ENCODE measurements at regions of chr2 and their contacts with region 1.

Region 1: DNA sequence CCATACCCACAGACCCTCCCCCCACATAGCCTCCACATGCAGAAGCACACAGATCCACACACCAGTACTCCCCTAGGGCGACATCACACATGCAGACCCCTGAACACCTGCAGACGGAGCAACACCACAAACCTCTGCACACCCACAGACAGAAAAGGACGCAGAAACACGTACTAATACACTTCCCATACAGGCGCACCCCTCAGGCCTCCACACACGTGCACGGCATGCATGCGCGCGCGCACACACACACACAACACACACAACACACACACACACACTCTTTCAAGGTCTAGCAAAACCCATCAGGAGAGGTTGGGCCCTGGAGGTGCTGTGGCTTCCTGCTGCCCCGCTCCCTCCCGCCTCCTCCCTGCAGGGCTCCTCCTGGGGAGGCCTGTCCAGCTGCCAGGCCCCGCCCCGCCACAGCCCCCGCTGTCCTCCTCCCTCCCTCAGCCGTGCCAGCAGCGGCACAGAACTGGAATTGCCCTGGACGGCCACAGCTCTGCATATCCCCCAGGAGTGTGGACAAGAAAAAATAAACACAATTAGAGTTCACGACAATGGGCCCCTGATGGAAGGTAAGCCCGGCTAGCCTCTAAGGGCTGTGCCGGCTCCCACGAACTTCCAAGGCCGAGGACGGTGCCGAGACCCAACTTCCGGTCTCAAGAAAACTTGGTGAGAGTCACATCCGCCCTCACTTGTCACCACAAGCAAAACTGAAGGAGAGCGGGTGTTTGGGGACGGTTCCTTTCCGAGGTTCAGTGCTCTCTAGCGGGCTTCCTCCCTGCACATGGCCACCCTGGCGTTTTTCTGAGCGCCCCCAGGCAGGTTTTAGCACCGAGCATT is 6.8 kb downstream of the ZFP36L2 start:
- DNase-seq: peak; percentile 91 to 95 (median 94)
- H3K4me3 ChIP-seq: peak overlapping the region in 6 of 7 experiments; percentile 89 to 100 (median 98)
- H3K27ac ChIP-seq: peak overlapping the region; percentile 81 to 91
- H3K4me1 ChIP-seq: peaks cover 27 to 61% (median 48%) of the 10 kb centered on the region in 4 experiments
- H3K27me3 ChIP-seq: no peaks in the 10 kb centered on the region

Region 2: GRCh38 chr2:43131024-43131889 is 88.3 kb before region 1 on chr2:
- CTCF ChIA-PET with region 1: interaction called, 178 read pairs
- POLR2A ChIA-PET with region 1: interaction called, 69 read pairs
- DNase-seq: peak; percentile 94 to 100 (median 98)
- H3K4me3 ChIP-seq: peak overlapping the region in 2 of 7 experiments; percentile 4 to 40
- H3K27ac ChIP-seq: peak overlapping the region; percentile 51 to 71
- H3K4me1 ChIP-seq: peaks cover 31 to 91% (median 88%) of the 10 kb centered on the region in 4 experiments
- H3K27me3 ChIP-seq: no peaks in the 10 kb centered on the region

Region 3: GRCh38 chr2:43169987-43170386 is 49.6 kb before region 1 on chr2:
- CTCF ChIA-PET with region 1: interaction called, 11 read pairs
- POLR2A ChIA-PET with region 1: interaction called, 11 read pairs
- DNase-seq: peak; percentile 38 to 61 (median 57)
- H3K4me3 ChIP-seq: peak overlapping the region in 4 of 7 experiments; percentile 19 to 51 (median 43)
- H3K27ac ChIP-seq: peak overlapping the region in 1 of 2 experiments; percentile 68
- H3K4me1 ChIP-seq: peaks cover 4 to 47% (median 44%) of the 10 kb centered on the region in 4 experiments
- H3K27me3 ChIP-seq: no peaks in the 10 kb centered on the region

Region 4: DNA sequence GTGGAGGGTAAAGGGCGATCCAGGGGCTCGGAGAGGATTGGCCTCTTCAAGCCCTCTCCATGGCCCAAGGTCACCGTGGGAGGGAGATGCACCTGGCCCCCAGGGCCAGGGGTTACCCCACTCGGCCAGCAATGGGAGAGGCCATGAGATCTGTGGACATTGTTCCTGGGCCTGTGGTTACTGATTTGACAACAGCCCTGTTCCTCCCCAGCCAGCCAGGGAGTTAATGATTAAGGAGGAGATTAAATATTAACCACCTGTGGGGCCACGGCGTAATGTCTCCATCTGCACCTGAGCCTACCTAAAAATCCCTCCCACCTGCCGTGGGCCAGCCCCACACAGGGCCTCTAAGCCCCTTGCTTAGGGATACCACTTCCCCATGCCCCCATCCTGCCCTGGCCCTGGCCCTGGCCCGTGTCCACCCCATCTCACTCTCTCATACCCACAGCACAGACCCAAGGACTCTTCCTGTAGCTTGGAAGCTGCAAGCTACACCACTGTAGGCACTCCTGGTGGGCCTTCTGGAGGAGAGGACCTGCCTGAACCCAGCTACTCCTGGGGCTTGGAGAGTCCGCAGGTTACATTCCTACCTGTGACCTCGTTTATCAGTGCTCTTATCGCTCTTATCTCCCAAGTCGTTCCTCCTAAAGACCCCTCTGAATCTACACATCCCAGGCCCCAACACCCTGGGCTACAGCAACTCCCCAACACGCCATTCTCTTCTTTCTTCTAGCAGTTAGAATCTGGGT is 25.3 kb before region 1 on chr2:
- CTCF ChIA-PET with region 1: interaction called, 15 read pairs
- POLR2A ChIA-PET with region 1: interaction called, 10 read pairs
- DNase-seq: peak in 1 of 3 donors; percentile 33
- H3K4me3 ChIP-seq: peak overlapping the region in 2 of 7 experiments; percentile 20 to 55
- H3K27ac ChIP-seq: peak overlapping the region in 1 of 2 experiments; percentile 82
- H3K4me1 ChIP-seq: peaks cover 15 to 76% (median 52%) of the 10 kb centered on the region in 4 experiments
- H3K27me3 ChIP-seq: no peaks in the 10 kb centered on the region

Region 5: GRCh38 chr2:43484323-43484930 is 264.8 kb after region 1 on chr2:
- CTCF ChIA-PET with region 1: interaction called, 27 read pairs
- POLR2A ChIA-PET with region 1: no interaction called
- DNase-seq: peak; percentile 89 to 92 (median 91)
- H3K4me3 ChIP-seq: no peak overlapping the region
- H3K27ac ChIP-seq: no peak overlapping the region
- H3K4me1 ChIP-seq: peaks cover 8 to 29% (median 12%) of the 10 kb centered on the region in 4 experiments
- H3K27me3 ChIP-seq: no peaks in the 10 kb centered on the region